ENCODE measurements at regions of chr12 and their contacts with region 1.

Region 1: DNA sequence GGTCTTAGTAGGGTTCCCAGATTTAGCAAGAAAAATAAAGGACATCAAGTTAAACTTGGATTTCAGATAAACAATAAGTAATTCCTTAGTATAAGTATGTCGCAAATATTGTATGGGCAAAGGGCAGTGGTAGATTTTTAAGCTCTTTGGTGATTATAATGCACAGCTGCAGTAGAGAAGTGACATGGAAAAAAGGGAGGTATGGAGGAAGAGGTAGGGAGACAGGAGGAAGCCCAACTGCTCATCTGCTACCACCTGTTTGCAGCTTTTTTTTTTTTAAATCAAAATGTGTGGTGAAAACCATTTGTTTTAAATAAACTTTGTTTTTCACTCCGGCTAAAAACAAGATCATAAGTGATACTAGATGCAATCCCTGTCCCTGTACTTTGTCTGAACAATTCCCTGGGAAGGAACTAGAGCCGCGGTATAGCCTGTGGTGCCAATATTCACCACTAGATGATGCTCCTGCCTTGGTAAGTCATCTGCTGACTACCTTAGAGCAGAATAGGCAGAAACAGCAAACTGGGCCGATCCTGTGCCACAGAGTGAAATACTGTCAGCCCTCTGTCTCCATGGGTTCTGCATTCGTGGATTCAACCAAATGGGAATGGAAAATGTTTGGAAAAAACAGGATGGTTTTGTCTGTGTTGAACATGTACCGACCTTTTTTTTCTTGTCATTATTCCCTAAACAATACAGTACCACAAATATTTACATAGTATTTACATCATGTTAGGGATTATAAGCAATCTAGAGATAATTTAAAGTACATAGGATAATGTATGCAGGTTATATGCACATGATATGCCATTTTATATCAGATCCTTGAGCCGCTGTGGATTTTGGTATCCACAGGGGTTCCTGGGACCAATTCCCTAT is 62.4 kb upstream of the PLBD1 start:
- DNase-seq: peak; percentile 32 to 77 (median 66)
- ATAC-seq: peak; percentile 100
- H3K4me3 ChIP-seq: no peak overlapping the region
- H3K4me3 Mint-ChIP-seq: no peak overlapping the region
- H3K27ac ChIP-seq: no peak overlapping the region
- H3K27ac Mint-ChIP-seq: no peak overlapping the region
- H3K4me1 ChIP-seq: no peaks in the 10 kb centered on the region
- H3K4me1 Mint-ChIP-seq: peaks cover 2% of the 10 kb centered on the region
- H3K27me3 ChIP-seq: no peaks in the 10 kb centered on the region
- H3K27me3 Mint-ChIP-seq: peaks cover 2% of the 10 kb centered on the region
- CTCF ChIP-seq: peak; percentile 99

Region 2: GRCh38 chr12:14618983-14619382 is 11.1 kb before region 1 on chr12:
- CTCF ChIA-PET with region 1: interaction called, 15 read pairs
- POLR2A ChIA-PET with region 1: no interaction called
- intact Hi-C with region 1: no loop called
- DNase-seq: peak in 2 of 9 experiments; percentile 35 to 48
- ATAC-seq: no peak
- H3K4me3 ChIP-seq: no peak overlapping the region
- H3K4me3 Mint-ChIP-seq: no peak overlapping the region
- H3K27ac ChIP-seq: no peak overlapping the region
- H3K27ac Mint-ChIP-seq: no peak overlapping the region
- H3K4me1 ChIP-seq: no peaks in the 10 kb centered on the region
- H3K4me1 Mint-ChIP-seq: no peaks in the 10 kb centered on the region
- H3K27me3 ChIP-seq: no peaks in the 10 kb centered on the region
- H3K27me3 Mint-ChIP-seq: peaks cover 22% of the 10 kb centered on the region
- CTCF ChIP-seq: no peak

Region 3: GRCh38 chr12:14664510-14664909 is 34.4 kb after region 1 on chr12:
- CTCF ChIA-PET with region 1: interaction called, 14 read pairs
- POLR2A ChIA-PET with region 1: no interaction called
- intact Hi-C with region 1: loop called (anchors 1 kb)
- DNase-seq: peak in 6 of 9 experiments; percentile 7 to 66 (median 36)
- ATAC-seq: peak; percentile 85
- H3K4me3 ChIP-seq: no peak overlapping the region
- H3K4me3 Mint-ChIP-seq: no peak overlapping the region
- H3K27ac ChIP-seq: no peak overlapping the region
- H3K27ac Mint-ChIP-seq: no peak overlapping the region
- H3K4me1 ChIP-seq: no peaks in the 10 kb centered on the region
- H3K4me1 Mint-ChIP-seq: peaks cover 5% of the 10 kb centered on the region
- H3K27me3 ChIP-seq: no peaks in the 10 kb centered on the region
- H3K27me3 Mint-ChIP-seq: peaks cover 5% of the 10 kb centered on the region
- CTCF ChIP-seq: peak; percentile 87

Region 4: GRCh38 chr12:14716848-14717444 is 86.9 kb after region 1 on chr12:
- CTCF ChIA-PET with region 1: interaction called, 28 read pairs
- POLR2A ChIA-PET with region 1: no interaction called
- intact Hi-C with region 1: loop called (anchors 1 kb)
- DNase-seq: peak; percentile 10 to 73 (median 48)
- ATAC-seq: peak; percentile 71
- H3K4me3 ChIP-seq: no peak overlapping the region
- H3K4me3 Mint-ChIP-seq: no peak overlapping the region
- H3K27ac ChIP-seq: no peak overlapping the region
- H3K27ac Mint-ChIP-seq: no peak overlapping the region
- H3K4me1 ChIP-seq: no peaks in the 10 kb centered on the region
- H3K4me1 Mint-ChIP-seq: peaks cover 6% of the 10 kb centered on the region
- H3K27me3 ChIP-seq: no peaks in the 10 kb centered on the region
- H3K27me3 Mint-ChIP-seq: peaks cover 3% of the 10 kb centered on the region
- CTCF ChIP-seq: peak; percentile 64

Region 5: DNA sequence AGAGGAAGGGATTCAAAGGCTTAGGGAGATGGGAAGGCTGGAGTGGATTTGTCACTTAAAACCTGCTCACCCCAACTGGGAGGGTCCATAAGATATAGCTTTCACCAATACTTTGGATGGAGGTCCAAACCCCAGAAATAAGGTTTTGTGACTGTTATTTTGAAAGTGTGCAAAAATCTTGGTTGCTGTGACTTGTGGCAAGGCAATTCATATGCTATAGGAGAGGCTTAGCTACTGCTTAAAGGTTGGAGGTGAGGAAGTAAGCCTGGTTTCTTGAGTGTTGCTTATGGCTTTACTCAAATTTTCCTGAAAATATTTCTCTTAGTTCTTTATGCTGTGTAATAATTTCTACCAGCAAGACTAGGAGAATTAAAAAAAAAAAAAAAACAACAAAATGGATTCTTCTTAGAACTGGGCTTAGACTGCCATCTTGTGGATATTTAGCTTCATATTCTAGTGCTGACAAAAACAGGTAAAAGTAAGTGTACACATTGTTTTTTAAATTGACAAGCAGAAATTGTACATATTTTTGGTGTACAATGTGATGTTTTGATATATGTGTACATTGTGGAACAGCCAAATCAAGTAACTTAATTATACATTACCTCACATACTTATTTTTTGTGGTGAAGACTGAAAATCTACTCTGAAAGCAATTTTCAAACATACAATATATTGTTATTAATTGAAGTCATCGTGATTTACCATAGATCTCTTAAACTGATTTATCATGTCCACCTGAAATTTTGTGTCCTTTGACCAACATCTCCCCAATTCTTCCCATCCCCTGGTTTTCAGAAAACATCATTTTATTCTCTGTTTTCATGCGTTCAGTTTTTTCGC is 365.7 kb after region 1 on chr12:
- CTCF ChIA-PET with region 1: interaction called, 4 read pairs
- POLR2A ChIA-PET with region 1: no interaction called
- intact Hi-C with region 1: loop called (anchors 1 to 2 kb)
- DNase-seq: peak in 2 of 9 experiments; percentile 78 to 85
- ATAC-seq: peak; percentile 70
- H3K4me3 ChIP-seq: no peak overlapping the region
- H3K4me3 Mint-ChIP-seq: peak overlapping the region; percentile 20
- H3K27ac ChIP-seq: no peak overlapping the region
- H3K27ac Mint-ChIP-seq: peak overlapping the region; percentile 63
- H3K4me1 ChIP-seq: peaks cover 29% of the 10 kb centered on the region
- H3K4me1 Mint-ChIP-seq: peaks cover 31% of the 10 kb centered on the region
- H3K27me3 ChIP-seq: no peaks in the 10 kb centered on the region
- H3K27me3 Mint-ChIP-seq: peaks cover 2% of the 10 kb centered on the region
- CTCF ChIP-seq: peak; percentile 75

Region 6: GRCh38 chr12:15268927-15269552 is 639.0 kb after region 1 on chr12:
- CTCF ChIA-PET with region 1: no interaction called
- POLR2A ChIA-PET with region 1: no interaction called
- intact Hi-C with region 1: loop called (anchors 1 to 5 kb)
- DNase-seq: peak in 5 of 9 experiments; percentile 18 to 71 (median 27)
- ATAC-seq: peak; percentile 72
- H3K4me3 ChIP-seq: no peak overlapping the region
- H3K4me3 Mint-ChIP-seq: no peak overlapping the region
- H3K27ac ChIP-seq: no peak overlapping the region
- H3K27ac Mint-ChIP-seq: no peak overlapping the region
- H3K4me1 ChIP-seq: no peaks in the 10 kb centered on the region
- H3K4me1 Mint-ChIP-seq: no peaks in the 10 kb centered on the region
- H3K27me3 ChIP-seq: no peaks in the 10 kb centered on the region
- H3K27me3 Mint-ChIP-seq: peaks cover 5% of the 10 kb centered on the region
- CTCF ChIP-seq: peak; percentile 89